ENCODE measurements at regions of chr2 and their contacts with region 1.

Region 1: GRCh38 chr2:190679813-190680591 is 31.1 kb downstream of the NAB1 start:
- DNase-seq: peak; percentile 75
- H3K4me3 Mint-ChIP-seq: peak overlapping the region; percentile 13
- H3K27ac Mint-ChIP-seq: peak overlapping the region; percentile 81
- H3K4me1 Mint-ChIP-seq: peaks cover 52% of the 10 kb centered on the region
- H3K27me3 Mint-ChIP-seq: no peaks in the 10 kb centered on the region

Region 2: GRCh38 chr2:189783927-189784867 is 895.8 kb before region 1 on chr2 and contains the starts of genes ORMDL1 and PMS1:
- CTCF ChIA-PET with region 1: no interaction called
- intact Hi-C with region 1: loop called (anchors 10 kb)
- DNase-seq: peak; percentile 93
- H3K4me3 Mint-ChIP-seq: peak within 1 kb of the TSS; percentile 93
- H3K27ac Mint-ChIP-seq: peak within 1 kb of the TSS; percentile 92
- H3K4me1 Mint-ChIP-seq: peaks cover 51% of the 10 kb centered on the region
- H3K27me3 Mint-ChIP-seq: no peaks in the 10 kb centered on the region
- total RNA-seq, gene ORMDL1: 34.6 to 37.3 TPM
- total RNA-seq, gene PMS1: 29.7 to 32.5 TPM

Region 3: GRCh38 chr2:190382851-190383250 is 297.2 kb before region 1 on chr2:
- CTCF ChIA-PET with region 1: interaction called, 6 read pairs
- intact Hi-C with region 1: loop called (anchors 1 kb)
- DNase-seq: peak; percentile 49
- H3K4me3 Mint-ChIP-seq: no peak overlapping the region
- H3K27ac Mint-ChIP-seq: no peak overlapping the region
- H3K4me1 Mint-ChIP-seq: peaks cover 2% of the 10 kb centered on the region
- H3K27me3 Mint-ChIP-seq: no peaks in the 10 kb centered on the region

Region 4: DNA sequence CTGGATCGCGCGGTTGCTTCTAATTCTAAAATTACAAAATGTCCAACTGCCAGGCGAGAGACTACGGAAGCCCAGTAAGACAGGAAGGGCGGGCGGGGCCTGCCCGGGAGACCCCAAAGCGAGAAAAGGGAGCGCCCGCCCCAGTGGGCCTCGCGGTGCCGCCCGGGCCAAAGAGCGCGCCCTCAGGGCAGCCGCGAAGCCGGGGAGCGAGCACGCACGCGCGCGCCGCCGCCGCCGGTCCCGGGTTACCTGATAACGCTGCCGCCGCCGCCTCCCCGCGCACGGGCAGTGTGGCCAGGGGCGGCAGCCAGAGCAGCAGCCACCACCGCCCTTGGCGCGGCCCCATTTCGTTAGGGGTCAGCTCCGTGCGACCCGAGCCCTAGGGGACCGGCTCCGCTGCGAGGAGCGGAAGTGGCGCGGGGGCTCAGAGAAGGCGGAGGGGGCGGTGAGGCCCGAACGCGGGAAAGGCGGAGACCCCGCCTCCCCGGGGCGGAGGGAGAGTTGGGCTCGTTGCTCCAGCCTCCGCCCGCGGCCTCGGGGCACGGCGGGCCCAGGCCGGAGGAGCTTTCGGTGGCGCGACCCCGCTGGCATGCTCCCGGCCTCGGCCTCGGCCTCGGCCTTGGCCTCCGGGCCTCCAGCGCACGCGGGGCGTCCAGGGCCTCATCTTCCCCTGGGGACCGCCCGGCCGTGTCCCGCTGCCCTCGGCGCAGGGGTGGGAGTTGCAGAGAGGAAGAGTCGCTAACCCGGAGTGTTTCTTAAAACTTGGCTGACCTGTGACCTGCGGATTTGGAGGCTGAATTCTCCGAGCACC is 145.5 kb before region 1 on chr2 and contains the start of gene NEMP2:
- CTCF ChIA-PET with region 1: interaction called, 3 read pairs
- intact Hi-C with region 1: loop called (anchors 1 kb)
- DNase-seq: peak; percentile 82
- H3K4me3 Mint-ChIP-seq: peak within 1 kb of the TSS; percentile 96
- H3K27ac Mint-ChIP-seq: peak within 1 kb of the TSS; percentile 100
- H3K4me1 Mint-ChIP-seq: peaks cover 51% of the 10 kb centered on the region
- H3K27me3 Mint-ChIP-seq: no peaks in the 10 kb centered on the region
- total RNA-seq, gene NEMP2: 32.9 to 34.2 TPM

Region 5: GRCh38 chr2:190695739-190696138 is 15.7 kb after region 1 on chr2:
- CTCF ChIA-PET with region 1: interaction called, 16 read pairs
- intact Hi-C with region 1: loop called (anchors 1 kb)
- DNase-seq: peak; percentile 55
- H3K4me3 Mint-ChIP-seq: no peak overlapping the region
- H3K27ac Mint-ChIP-seq: no peak overlapping the region
- H3K4me1 Mint-ChIP-seq: peaks cover 23% of the 10 kb centered on the region
- H3K27me3 Mint-ChIP-seq: no peaks in the 10 kb centered on the region

Region 6: DNA sequence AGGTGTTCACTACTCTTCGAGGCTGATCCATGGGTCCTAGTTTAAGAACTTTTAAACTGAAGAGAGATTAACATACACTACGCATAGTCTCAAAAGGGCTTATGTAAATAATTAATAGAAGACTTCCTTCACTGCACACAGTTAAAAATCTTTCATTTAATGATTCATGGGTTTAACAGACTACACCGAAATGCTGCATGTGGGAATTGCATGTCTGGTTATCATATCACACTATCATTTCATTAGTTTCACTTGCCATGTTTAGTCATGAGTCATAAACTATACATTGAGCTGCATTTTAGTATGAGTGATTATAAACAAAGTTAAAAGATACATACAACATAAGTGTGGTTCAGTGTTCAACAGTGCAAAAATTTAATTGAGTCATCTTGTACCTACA is 231.8 kb after region 1 on chr2:
- CTCF ChIA-PET with region 1: no interaction called
- intact Hi-C with region 1: loop called (anchors 2 kb)
- DNase-seq: no peak
- H3K4me3 Mint-ChIP-seq: no peak overlapping the region
- H3K27ac Mint-ChIP-seq: peak overlapping the region; percentile 51
- H3K4me1 Mint-ChIP-seq: peaks cover 48% of the 10 kb centered on the region
- H3K27me3 Mint-ChIP-seq: no peaks in the 10 kb centered on the region

Region 7: GRCh38 chr2:191195021-191195420 is 515.0 kb after region 1 on chr2:
- CTCF ChIA-PET with region 1: no interaction called
- intact Hi-C with region 1: loop called (anchors 2 kb)
- DNase-seq: no peak
- H3K4me3 Mint-ChIP-seq: no peak overlapping the region
- H3K27ac Mint-ChIP-seq: peak overlapping the region; percentile 99
- H3K4me1 Mint-ChIP-seq: peaks cover 58% of the 10 kb centered on the region
- H3K27me3 Mint-ChIP-seq: no peaks in the 10 kb centered on the region